Activated B cell treated with CpG ODN at 0.5 μM for 24 hours (primary cell): ENCODE measurements at regions of chr21 and their contacts with region 1.

Region 1: DNA sequence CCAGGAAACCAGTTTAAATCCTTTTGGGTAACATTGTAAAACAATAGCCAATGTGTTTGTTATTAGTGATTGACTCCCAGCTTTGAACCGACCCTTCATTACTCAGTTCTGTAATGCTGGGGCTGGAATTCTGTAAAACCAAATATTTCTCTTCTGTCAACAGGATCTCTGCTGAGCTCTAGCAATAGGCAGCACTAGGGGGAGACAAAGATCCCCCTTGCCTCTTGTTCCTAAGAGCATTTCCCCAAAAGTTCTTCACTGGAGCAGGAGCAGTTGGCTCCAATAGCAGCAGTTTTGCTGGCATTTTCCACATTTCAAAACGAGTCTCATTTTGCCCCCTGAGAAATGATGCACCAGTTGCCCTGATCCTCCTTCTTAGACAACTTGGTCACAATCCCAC is 1671.1 kb downstream of the MRPL39 start:
- DNase-seq: no peak
- ATAC-seq: no peak
- H3K4me3 Mint-ChIP-seq: no peak overlapping the region
- H3K27ac Mint-ChIP-seq: peak overlapping the region; percentile 46
- H3K4me1 Mint-ChIP-seq: peaks cover 19% of the 10 kb centered on the region
- H3K27me3 Mint-ChIP-seq: no peaks in the 10 kb centered on the region
- CTCF ChIP-seq: no peak

Region 2: DNA sequence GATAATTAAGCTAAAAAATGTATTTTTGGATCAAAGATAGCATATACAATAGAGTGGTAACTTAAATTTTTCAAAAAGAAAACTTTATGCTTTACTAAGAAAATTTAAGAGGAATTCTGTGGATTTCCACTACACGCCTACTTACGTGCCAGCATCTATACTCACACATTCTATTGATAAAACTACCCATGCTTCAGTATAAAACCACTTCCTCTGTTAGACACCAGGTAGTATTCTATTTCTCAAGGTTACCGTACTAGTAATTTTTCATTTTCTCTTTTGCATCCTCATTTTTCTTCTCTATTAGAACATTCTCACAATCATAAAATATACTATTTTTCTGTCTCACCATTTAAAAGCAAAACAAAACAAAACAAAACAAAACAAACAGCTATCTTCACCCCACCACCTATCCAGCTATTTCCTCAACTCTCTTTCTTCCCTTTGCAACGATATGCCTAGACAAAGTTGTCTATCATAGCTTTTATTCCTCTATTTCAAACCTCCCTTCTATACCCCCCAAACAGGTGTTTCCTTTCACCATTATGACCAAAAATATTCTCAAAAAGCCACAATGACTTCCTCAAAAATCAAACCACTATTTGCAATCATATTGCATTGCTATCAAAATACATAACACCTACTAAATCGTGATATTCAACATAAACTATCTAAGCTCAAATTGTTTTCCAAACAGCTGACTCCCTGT is 19.1 kb after region 1 on chr21:
- CTCF ChIA-PET with region 1: no interaction called
- POLR2A ChIA-PET with region 1: no interaction called
- intact Hi-C with region 1: loop called (anchors 2 kb)
- DNase-seq: no peak
- ATAC-seq: no peak
- H3K4me3 Mint-ChIP-seq: peak overlapping the region; percentile 68
- H3K27ac Mint-ChIP-seq: peak overlapping the region; percentile 50
- H3K4me1 Mint-ChIP-seq: peaks cover 44% of the 10 kb centered on the region
- H3K27me3 Mint-ChIP-seq: no peaks in the 10 kb centered on the region
- CTCF ChIP-seq: no peak